ENCODE measurements at regions of chr14 and their contacts with region 1.

Region 1: DNA sequence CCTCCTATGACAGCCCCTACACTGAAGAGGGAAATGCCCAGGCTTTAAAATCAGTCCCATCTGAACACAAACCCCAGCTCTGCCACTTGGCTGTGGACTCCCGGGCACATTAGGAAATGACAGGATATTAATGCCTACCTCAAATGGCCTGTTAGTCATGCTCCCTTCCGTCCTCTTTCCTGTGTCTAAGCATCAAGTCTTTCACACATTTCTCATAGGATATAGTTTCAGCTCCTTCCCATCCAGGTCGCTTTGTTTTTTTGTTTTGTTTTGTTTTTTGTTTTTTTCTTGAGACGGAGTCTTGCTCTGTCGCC is 16.1 kb downstream of the PLEK2 start:
- DNase-seq: peak in 1 of 2 experiments; percentile 26
- H3K4me3 ChIP-seq: no peak overlapping the region
- H3K27ac ChIP-seq: no peak overlapping the region
- H3K4me1 ChIP-seq: no peaks in the 10 kb centered on the region
- H3K27me3 ChIP-seq: no peaks in the 10 kb centered on the region
- CTCF ChIP-seq: no peak

Region 2: DNA sequence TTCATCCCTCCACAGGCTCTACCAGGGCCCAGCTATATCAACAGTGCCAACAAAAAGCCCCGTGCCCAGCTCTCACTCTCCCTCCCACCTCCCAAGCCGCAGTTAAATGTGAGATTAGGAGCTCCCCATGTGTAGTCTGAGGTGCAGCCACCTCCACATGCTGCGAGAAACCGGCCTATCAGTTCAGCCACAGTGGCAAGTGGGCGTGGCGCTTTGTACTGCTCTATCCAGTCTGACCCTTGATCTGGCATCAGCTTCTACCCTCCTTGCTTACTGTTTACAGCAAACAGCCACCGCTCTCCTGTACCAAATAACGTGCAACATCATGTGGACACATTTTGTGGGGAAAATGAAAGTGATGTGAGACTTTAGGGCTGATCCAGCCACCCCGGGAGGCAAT is 14.5 kb after region 1 on chr14:
- CTCF ChIA-PET with region 1: no interaction called
- POLR2A ChIA-PET with region 1: interaction called, 11 read pairs
- intact Hi-C with region 1: no loop called
- DNase-seq: peak in 1 of 2 experiments; percentile 28
- H3K4me3 ChIP-seq: no peak overlapping the region
- H3K27ac ChIP-seq: no peak overlapping the region
- H3K4me1 ChIP-seq: peaks cover 45% of the 10 kb centered on the region
- H3K27me3 ChIP-seq: no peaks in the 10 kb centered on the region
- CTCF ChIP-seq: no peak

Measured in PC-9 (cell line).